Calu3 (cell line): ENCODE measurements at regions of chr1 and their contacts with region 1.

Region 1: GRCh38 chr1:74652597-74653139 is 20.9 kb downstream of the ERICH3 start:
- DNase-seq: peak; percentile 76
- H3K4me3 Mint-ChIP-seq: peak overlapping the region; percentile 17
- H3K27ac Mint-ChIP-seq: peak overlapping the region; percentile 92
- H3K4me1 Mint-ChIP-seq: peaks cover 20% of the 10 kb centered on the region
- H3K27me3 Mint-ChIP-seq: no peaks in the 10 kb centered on the region
- CTCF ChIP-seq: no peak

Region 2: DNA sequence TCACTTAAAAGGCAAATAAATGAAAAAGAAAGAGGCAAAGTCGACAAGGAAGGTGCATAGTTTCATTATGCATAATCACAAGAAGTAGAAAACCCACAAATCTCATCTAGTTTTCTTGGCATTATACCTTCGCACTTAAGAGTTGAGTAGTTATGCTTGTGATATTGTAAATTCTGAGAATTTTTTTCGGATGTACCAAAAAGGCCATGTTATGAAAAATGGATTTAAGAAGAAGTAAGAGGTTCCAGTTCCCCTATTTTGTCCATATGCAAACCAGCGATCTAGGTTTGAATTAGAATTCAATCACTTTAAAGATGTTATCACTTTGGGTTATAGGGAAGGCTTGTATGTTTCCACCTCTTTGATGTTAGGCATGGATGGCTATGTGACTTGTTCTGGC is 28.8 kb after region 1 on chr1:
- CTCF ChIA-PET with region 1: no interaction called
- intact Hi-C with region 1: no loop called
- DNase-seq: no peak
- H3K4me3 Mint-ChIP-seq: no peak overlapping the region
- H3K27ac Mint-ChIP-seq: no peak overlapping the region
- H3K4me1 Mint-ChIP-seq: no peaks in the 10 kb centered on the region
- H3K27me3 Mint-ChIP-seq: no peaks in the 10 kb centered on the region
- CTCF ChIP-seq: no peak

Region 3: GRCh38 chr1:74733604-74734484 is 81.2 kb after region 1 on chr1:
- CTCF ChIA-PET with region 1: no interaction called
- intact Hi-C with region 1: loop called (anchors 2 kb)
- DNase-seq: peak; percentile 58
- H3K4me3 Mint-ChIP-seq: peak overlapping the region; percentile 82
- H3K27ac Mint-ChIP-seq: peak overlapping the region; percentile 90
- H3K4me1 Mint-ChIP-seq: peaks cover 28% of the 10 kb centered on the region
- H3K27me3 Mint-ChIP-seq: no peaks in the 10 kb centered on the region
- CTCF ChIP-seq: peak; percentile 37